CD4-positive, alpha-beta memory T cell (primary cell): ENCODE measurements at regions of chr7 and their contacts with region 1.

Region 1: GRCh38 chr7:158976849-158977593 is 120.7 kb downstream of the DYNC2I1 start:
- DNase-seq: peak; percentile 82 to 88 (median 85)
- H3K4me3 ChIP-seq: peak overlapping the region; percentile 63 to 71
- H3K4me3 Mint-ChIP-seq: peak overlapping the region; percentile 86 to 99 (median 90)
- H3K27ac ChIP-seq: peak overlapping the region; percentile 36
- H3K27ac Mint-ChIP-seq: peak overlapping the region; percentile 81 to 95 (median 90)
- H3K4me1 ChIP-seq: peaks cover 21% of the 10 kb centered on the region
- H3K4me1 Mint-ChIP-seq: peaks cover 11 to 24% (median 19%) of the 10 kb centered on the region in 4 donors
- H3K27me3 ChIP-seq: no peaks in the 10 kb centered on the region
- H3K27me3 Mint-ChIP-seq: no peaks in the 10 kb centered on the region

Region 2: DNA sequence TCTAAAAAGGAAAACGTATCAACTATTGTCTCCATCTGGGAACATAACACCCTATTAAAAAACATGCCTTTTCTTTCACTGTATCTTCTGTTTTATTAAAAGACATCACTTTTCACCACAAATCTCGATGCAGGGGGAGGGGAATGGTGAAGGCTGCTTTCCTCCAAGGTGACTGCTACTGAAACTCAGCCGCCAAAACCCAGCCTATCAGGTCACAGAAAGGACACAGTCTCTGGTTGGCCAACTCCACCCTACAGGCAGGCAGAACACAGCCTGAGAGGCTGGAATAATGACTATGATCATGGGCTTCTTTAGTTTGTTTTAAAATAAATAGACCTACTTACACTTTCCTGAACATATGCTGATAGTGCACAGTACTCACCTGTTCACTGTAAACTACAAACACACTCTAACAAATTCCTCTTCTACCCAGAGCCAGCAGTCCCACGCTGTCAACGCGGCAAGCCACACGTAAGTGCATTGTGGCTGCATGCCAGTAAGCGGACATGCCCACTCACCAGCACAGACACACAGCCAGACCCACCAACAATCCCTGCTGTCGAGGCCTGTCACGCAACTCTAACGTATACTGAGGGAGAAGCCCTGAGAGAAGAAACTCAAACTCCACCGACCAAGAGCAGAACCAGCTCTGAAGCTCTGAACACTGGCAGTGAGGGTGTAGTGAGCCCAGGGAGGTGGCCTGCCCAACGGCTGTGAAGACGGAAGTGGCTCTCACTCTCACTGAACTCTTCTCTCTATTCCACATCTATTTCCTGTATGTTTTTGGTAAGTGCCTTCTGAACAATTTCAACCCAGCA is 314.2 kb before region 1 on chr7:
- CTCF ChIA-PET with region 1: no interaction called
- POLR2A ChIA-PET with region 1: no interaction called
- intact Hi-C with region 1: no loop called
- DNase-seq: peak in 4 of 5 donors; percentile 15 to 32 (median 22)
- H3K4me3 ChIP-seq: no peak overlapping the region
- H3K4me3 Mint-ChIP-seq: peak overlapping the region; percentile 32 to 80 (median 74)
- H3K27ac ChIP-seq: peak overlapping the region; percentile 13
- H3K27ac Mint-ChIP-seq: peak overlapping the region; percentile 61 to 89 (median 84)
- H3K4me1 ChIP-seq: peaks cover 8% of the 10 kb centered on the region
- H3K4me1 Mint-ChIP-seq: peaks cover 5 to 22% (median 13%) of the 10 kb centered on the region in 4 donors
- H3K27me3 ChIP-seq: no peaks in the 10 kb centered on the region
- H3K27me3 Mint-ChIP-seq: no peaks in the 10 kb centered on the region

Region 3: DNA sequence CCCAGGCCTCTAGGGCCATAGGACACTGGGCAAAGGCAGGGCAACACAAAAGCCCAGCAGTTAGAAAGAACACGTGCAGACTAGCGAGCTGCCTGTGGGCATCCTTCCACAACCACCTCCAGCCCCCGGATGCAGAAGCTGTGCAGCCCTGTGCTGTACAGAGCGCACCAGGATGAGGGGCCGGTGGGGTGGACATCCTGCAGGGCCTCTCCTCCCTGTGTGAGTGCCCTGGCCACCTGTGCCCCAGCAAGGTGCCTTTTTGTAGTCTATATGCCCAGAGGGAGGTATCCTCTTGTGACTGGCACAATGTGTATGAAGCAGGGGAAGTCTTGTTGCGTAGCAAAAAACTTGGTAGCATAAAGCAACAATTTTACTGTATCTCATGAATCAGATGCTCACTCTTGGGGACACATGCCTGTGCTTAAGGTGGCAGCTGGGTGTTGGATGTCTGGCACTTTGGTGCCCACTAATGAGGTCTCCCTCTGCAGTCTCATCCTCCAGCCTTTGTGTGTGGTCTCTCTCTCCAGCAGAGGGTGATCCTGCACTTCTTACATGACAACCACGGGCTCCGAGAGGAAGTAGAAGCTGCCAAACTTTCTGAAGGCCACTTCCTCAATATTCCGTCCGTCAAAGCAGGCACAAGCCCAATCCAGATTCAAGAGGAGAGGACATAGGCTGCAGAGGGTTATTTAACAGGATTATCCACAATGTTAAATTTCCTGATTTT is 281.1 kb before region 1 on chr7:
- CTCF ChIA-PET with region 1: interaction called, 154 read pairs
- POLR2A ChIA-PET with region 1: interaction called, 19 read pairs
- intact Hi-C with region 1: loop called (anchors 1 kb)
- DNase-seq: peak; percentile 43 to 67 (median 58)
- H3K4me3 ChIP-seq: no peak overlapping the region
- H3K4me3 Mint-ChIP-seq: peak overlapping the region in 6 of 8 donors; percentile 11 to 75 (median 70)
- H3K27ac ChIP-seq: peak overlapping the region; percentile 12
- H3K27ac Mint-ChIP-seq: peak overlapping the region; percentile 60 to 90 (median 64)
- H3K4me1 ChIP-seq: peaks cover 28% of the 10 kb centered on the region
- H3K4me1 Mint-ChIP-seq: peaks cover 8 to 13% (median 12%) of the 10 kb centered on the region in 4 donors
- H3K27me3 ChIP-seq: no peaks in the 10 kb centered on the region
- H3K27me3 Mint-ChIP-seq: no peaks in the 10 kb centered on the region

Region 4: DNA sequence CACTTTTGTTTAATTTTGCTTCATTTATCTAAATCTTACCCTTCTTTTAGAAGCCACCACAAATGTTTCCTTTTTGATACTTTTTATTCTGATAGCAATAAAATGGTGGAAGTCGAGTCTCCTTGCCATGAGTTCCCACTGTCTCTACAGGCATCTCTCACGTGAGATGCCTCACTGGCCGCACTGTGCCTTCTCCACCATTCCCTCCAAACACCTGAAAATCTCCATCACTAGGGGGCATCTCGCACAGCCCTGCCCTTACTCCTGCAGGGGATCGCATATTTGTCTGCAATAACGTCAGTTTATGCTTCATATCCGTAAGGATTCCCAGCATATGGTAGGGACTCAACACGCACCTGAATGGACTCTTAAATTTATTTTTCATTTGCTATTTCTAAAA is 216.1 kb before region 1 on chr7:
- CTCF ChIA-PET with region 1: interaction called, 18 read pairs
- POLR2A ChIA-PET with region 1: no interaction called
- intact Hi-C with region 1: loop called (anchors 2 kb)
- DNase-seq: peak in 2 of 5 donors; percentile 19 to 24
- H3K4me3 ChIP-seq: no peak overlapping the region
- H3K4me3 Mint-ChIP-seq: no peak overlapping the region
- H3K27ac ChIP-seq: no peak overlapping the region
- H3K27ac Mint-ChIP-seq: peak overlapping the region in 5 of 7 donors; percentile 5 to 82 (median 56)
- H3K4me1 ChIP-seq: no peaks in the 10 kb centered on the region
- H3K4me1 Mint-ChIP-seq: peaks cover 0 to 8% (median 1%) of the 10 kb centered on the region in 4 donors
- H3K27me3 ChIP-seq: no peaks in the 10 kb centered on the region
- H3K27me3 Mint-ChIP-seq: no peaks in the 10 kb centered on the region

Region 5: DNA sequence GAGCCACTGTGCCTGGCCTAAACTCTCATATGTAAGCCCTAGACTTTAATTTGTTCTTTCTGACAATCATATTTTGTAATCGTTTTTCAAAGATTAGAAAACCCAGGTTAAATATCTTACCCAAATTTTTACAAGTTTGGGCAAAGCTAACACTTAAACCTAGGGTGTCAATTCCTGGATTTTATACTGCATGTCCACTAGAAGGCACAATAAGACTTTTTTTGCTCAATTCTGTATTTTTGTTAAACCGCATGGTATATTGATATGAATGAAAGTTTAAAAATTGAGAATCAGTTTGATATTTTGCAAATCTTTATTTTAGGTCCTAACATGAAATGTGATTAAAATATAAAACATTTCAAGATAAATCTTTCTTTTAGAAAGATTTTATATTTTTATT is 91.4 kb before region 1 on chr7:
- CTCF ChIA-PET with region 1: interaction called, 25 read pairs
- POLR2A ChIA-PET with region 1: no interaction called
- intact Hi-C with region 1: loop called (anchors 2 kb)
- DNase-seq: peak in 1 of 5 donors; percentile 4
- H3K4me3 ChIP-seq: no peak overlapping the region
- H3K4me3 Mint-ChIP-seq: no peak overlapping the region
- H3K27ac ChIP-seq: no peak overlapping the region
- H3K27ac Mint-ChIP-seq: no peak overlapping the region
- H3K4me1 ChIP-seq: no peaks in the 10 kb centered on the region
- H3K4me1 Mint-ChIP-seq: no peaks in the 10 kb centered on the region
- H3K27me3 ChIP-seq: no peaks in the 10 kb centered on the region
- H3K27me3 Mint-ChIP-seq: no peaks in the 10 kb centered on the region

Region 6: GRCh38 chr7:158966780-158967390 is 10.1 kb before region 1 on chr7:
- CTCF ChIA-PET with region 1: interaction called, 17 read pairs
- POLR2A ChIA-PET with region 1: no interaction called
- intact Hi-C with region 1: no loop called
- DNase-seq: no peak
- H3K4me3 ChIP-seq: no peak overlapping the region
- H3K4me3 Mint-ChIP-seq: no peak overlapping the region
- H3K27ac ChIP-seq: no peak overlapping the region
- H3K27ac Mint-ChIP-seq: peak overlapping the region in 1 of 7 donors; percentile 23
- H3K4me1 ChIP-seq: no peaks in the 10 kb centered on the region
- H3K4me1 Mint-ChIP-seq: no peaks in the 10 kb centered on the region
- H3K27me3 ChIP-seq: no peaks in the 10 kb centered on the region
- H3K27me3 Mint-ChIP-seq: peaks cover 5 to 16% of the 10 kb centered on the region in 2 donors